Endothelial cell of umbilical vein (primary cell): ENCODE measurements at regions of chr2 and their contacts with region 1.

Region 1: DNA sequence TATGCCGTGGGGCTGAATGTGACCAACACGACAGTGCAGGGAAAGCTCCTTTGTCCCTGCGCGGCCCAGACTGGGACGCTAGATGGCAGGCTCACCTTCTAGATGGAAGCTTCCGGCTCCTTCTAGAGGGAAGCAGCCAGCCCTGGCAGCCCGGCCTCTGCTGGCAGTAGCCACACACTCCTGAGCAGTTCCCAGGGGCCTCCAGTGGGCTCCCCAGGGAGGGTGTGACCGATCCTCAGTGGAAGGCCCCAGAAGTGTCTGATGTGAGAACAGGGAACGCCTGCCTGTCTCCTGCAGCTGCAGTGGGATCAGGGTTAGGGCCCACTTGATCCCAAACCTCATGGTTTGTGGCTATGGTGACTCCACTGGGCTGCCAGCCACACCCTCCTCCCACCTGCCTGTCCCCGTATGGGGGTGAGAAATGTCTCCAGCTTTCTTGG is 48.5 kb upstream of the LRPPRC start:
- DNase-seq: peak; percentile 78
- H3K4me3 ChIP-seq: no peak overlapping the region
- H3K27ac ChIP-seq: no peak overlapping the region
- H3K4me1 ChIP-seq: no peaks in the 10 kb centered on the region
- H3K27me3 ChIP-seq: peaks cover 4 to 5% of the 10 kb centered on the region in 2 experiments
- CTCF ChIP-seq: peak; percentile 87 to 95
- POLR2A ChIP-seq: no peak

Region 2: GRCh38 chr2:44033947-44034346 is 10.4 kb before region 1 on chr2:
- CTCF ChIA-PET with region 1: interaction called, 16 read pairs
- POLR2A ChIA-PET with region 1: no interaction called
- dilution Hi-C with region 1: no loop called
- intact Hi-C with region 1: no loop called
- DNase-seq: no peak
- H3K4me3 ChIP-seq: no peak overlapping the region
- H3K27ac ChIP-seq: no peak overlapping the region
- H3K4me1 ChIP-seq: no peaks in the 10 kb centered on the region
- H3K27me3 ChIP-seq: peaks cover 6 to 7% of the 10 kb centered on the region in 2 experiments
- CTCF ChIP-seq: no peak
- POLR2A ChIP-seq: no peak

Region 3: GRCh38 chr2:44063033-44063432 is 18.7 kb after region 1 on chr2:
- CTCF ChIA-PET with region 1: interaction called, 11 read pairs
- POLR2A ChIA-PET with region 1: no interaction called
- dilution Hi-C with region 1: no loop called
- intact Hi-C with region 1: no loop called
- DNase-seq: no peak
- H3K4me3 ChIP-seq: no peak overlapping the region
- H3K27ac ChIP-seq: no peak overlapping the region
- H3K4me1 ChIP-seq: no peaks in the 10 kb centered on the region
- H3K27me3 ChIP-seq: peaks cover 0 to under 1% of the 10 kb centered on the region in 2 experiments
- CTCF ChIP-seq: no peak
- POLR2A ChIP-seq: no peak

Region 4: GRCh38 chr2:44087036-44087713 is 42.9 kb after region 1 on chr2:
- CTCF ChIA-PET with region 1: interaction called, 12 read pairs
- POLR2A ChIA-PET with region 1: no interaction called
- dilution Hi-C with region 1: no loop called
- intact Hi-C with region 1: no loop called
- DNase-seq: peak; percentile 85
- H3K4me3 ChIP-seq: peak overlapping the region in 2 of 3 experiments; percentile 15 to 45
- H3K27ac ChIP-seq: no peak overlapping the region
- H3K4me1 ChIP-seq: peaks cover 4% of the 10 kb centered on the region
- H3K27me3 ChIP-seq: peaks cover 19 to 27% of the 10 kb centered on the region in 2 experiments
- CTCF ChIP-seq: peak; percentile 92 to 95
- POLR2A ChIP-seq: no peak

Region 5: DNA sequence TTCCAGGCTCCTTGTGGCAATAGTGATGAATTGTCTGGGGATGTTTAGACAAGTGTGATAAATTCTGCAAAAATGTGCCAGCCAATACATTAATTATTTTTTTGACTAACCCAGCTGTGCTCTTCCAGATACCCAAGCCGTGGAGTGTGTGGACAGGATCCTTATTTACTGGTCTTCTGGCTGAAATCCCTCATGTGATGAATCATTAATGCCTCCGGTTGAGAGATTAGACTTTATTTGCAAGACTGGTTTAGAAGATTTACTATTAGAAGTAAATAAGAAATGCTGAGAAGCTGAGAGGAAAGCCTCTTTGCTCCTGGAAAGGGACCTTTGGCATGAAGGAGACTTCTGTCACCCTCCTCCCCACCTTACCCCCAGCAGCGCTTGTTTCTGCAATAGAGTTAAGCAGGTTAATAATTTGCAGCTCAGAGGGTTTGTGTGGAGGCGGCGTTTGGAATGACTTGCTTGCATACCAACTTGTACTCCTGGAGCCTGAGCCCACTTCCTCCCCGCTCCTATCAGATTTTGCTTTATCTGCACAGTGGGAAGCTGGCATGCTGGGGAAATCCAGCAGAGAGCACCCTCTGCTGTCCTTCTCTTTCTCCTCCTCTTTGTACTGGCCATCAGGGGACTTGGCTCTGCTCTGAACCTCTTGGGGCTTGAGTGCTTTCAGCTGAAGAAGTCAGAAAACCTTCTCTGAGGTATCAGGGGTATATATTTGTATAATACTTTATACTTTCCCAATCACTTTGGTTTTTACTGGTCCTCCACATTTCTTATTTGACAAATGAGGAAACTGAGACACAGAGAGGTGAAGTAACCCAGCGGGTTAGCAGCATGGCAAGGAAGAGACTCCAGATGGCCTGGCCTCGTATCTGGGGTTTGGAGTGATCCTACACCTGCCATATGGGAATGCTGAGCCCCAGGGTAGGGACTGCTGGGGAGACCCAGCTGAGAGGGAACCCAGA is 247.3 kb after region 1 on chr2:
- CTCF ChIA-PET with region 1: interaction called, 25 read pairs
- POLR2A ChIA-PET with region 1: no interaction called
- dilution Hi-C with region 1: no loop called
- intact Hi-C with region 1: loop called (anchors 2 kb)
- DNase-seq: peak; percentile 67
- H3K4me3 ChIP-seq: no peak overlapping the region
- H3K27ac ChIP-seq: no peak overlapping the region
- H3K4me1 ChIP-seq: peaks cover 6% of the 10 kb centered on the region
- H3K27me3 ChIP-seq: no peaks in the 10 kb centered on the region
- CTCF ChIP-seq: peak; percentile 35 to 48
- POLR2A ChIP-seq: no peak

Region 6: DNA sequence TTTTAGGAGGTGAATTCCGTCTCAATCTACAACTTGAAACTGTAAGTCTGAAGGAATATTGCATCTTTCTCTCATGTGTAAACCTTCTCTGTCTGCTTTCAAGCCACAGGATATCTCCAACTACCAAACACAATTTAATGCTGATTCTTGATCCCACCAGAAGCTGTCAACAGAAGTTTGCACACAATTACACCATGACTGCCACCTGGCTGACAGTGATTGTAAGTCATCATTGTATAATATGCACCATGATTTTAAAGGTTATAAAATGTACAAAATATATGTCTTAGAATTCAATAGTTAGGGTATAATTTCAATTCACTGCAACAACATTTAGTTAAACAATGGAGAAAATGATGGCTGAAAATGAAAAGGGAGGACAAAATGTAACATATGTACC is 298.6 kb after region 1 on chr2:
- CTCF ChIA-PET with region 1: interaction called, 28 read pairs
- POLR2A ChIA-PET with region 1: no interaction called
- dilution Hi-C with region 1: no loop called
- intact Hi-C with region 1: loop called (anchors 1 kb)
- DNase-seq: peak; percentile 20
- H3K4me3 ChIP-seq: no peak overlapping the region
- H3K27ac ChIP-seq: no peak overlapping the region
- H3K4me1 ChIP-seq: no peaks in the 10 kb centered on the region
- H3K27me3 ChIP-seq: no peaks in the 10 kb centered on the region
- CTCF ChIP-seq: no peak
- POLR2A ChIP-seq: no peak